ENCODE measurements at regions of chr6 and their contacts with region 1.

Region 1: GRCh38 chr6:33276864-33277662 is at the start of gene B3GALT4:
- H3K4me3 ChIP-seq: peak within 1 kb of the TSS; percentile 56
- H3K27ac ChIP-seq: peak within 1 kb of the TSS; percentile 79
- H3K4me1 ChIP-seq: peaks cover 31% of the 10 kb centered on the region
- CTCF ChIP-seq: peak; percentile 97

Region 2: DNA sequence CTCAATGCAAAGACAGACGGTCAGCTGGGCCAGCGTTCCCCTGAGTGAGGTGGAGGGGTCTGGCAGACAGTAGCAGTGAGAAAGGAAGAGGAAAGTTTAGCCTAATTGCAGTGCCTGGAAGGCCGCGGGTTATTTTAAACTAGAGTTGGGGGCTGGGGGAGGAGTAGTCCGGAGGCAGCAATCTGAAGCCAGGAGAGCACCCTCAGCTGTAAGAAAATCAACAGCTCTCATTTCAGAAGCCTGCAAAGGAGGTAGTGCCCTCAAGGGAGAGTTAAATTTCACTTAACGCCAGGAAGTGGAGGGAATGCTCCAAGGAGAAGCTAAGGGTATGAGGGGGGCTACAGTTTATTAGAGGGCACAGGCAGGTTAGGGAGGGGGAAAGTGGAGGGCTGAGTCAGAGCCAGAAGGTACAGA is 41.8 kb before region 1 on chr6:
- CTCF ChIA-PET with region 1: no interaction called
- POLR2A ChIA-PET with region 1: no interaction called
- H3K4me3 ChIP-seq: no peak overlapping the region
- H3K27ac ChIP-seq: peak overlapping the region; percentile 9; the same call in 1 of the 2 replicates
- H3K4me1 ChIP-seq: peaks cover 6% of the 10 kb centered on the region
- CTCF ChIP-seq: no peak

Region 3: GRCh38 chr6:33254591-33254990 is 22.5 kb before region 1 on chr6:
- CTCF ChIA-PET with region 1: interaction called, 8 read pairs
- POLR2A ChIA-PET with region 1: interaction called, 65 read pairs
- H3K4me3 ChIP-seq: no peak overlapping the region
- H3K27ac ChIP-seq: peak overlapping the region; percentile 50; the same call in 1 of the 2 replicates
- H3K4me1 ChIP-seq: peaks cover 5% of the 10 kb centered on the region
- CTCF ChIP-seq: no peak

Region 4: DNA sequence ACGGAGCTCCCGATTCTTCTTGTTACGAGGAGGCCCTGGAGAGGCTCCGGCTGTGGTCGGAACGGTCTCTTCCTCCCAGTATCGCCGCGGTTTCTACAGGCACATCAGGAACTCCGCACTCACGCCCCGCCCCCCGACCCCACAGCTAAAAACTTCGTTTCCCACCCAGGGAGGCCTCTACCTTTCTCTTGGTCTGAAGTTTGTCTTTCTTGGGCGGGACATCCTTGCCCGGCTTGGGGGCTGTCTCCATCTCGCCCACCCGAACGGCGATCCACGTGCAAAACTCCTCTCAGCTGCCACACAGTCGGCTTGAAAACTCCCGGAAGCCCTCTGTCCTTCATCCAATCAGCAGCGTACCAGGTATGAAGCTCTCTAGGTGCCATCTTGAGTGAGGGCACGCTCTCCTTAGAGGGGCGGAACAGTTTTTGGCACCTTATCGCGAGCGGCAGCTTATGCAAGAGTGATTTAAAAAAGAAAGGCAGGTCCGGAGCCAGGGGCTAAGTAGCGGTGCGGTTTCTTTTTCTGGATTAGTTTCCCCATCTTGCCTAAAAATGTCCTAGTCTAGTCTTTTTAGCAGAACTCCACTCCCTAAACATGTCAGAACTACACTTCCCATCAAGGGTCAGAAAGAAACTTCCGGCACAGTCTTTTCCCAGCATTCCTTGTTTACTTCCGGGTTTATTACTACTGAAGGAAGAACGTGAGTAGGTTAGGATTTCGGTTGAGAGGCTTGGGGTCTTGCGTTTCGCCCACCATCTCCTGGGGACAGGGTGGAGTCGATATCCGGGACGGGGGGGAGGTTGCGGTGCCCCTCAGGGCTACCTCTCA is 12.1 kb after region 1 on chr6 and contains the starts of genes PFDN6 and WDR46:
- CTCF ChIA-PET with region 1: interaction called, 22 read pairs
- POLR2A ChIA-PET with region 1: interaction called, 92 read pairs
- H3K4me3 ChIP-seq: peak within 1 kb of the TSS; percentile 79
- H3K27ac ChIP-seq: peak within 1 kb of the TSS; percentile 44
- H3K4me1 ChIP-seq: peaks cover 11% of the 10 kb centered on the region; the same call in 1 of the 2 replicates
- CTCF ChIP-seq: no peak

Region 5: GRCh38 chr6:33299237-33299944 is 22.3 kb after region 1 on chr6:
- CTCF ChIA-PET with region 1: interaction called, 13 read pairs
- POLR2A ChIA-PET with region 1: interaction called, 51 read pairs
- H3K4me3 ChIP-seq: peak overlapping the region; percentile 74
- H3K27ac ChIP-seq: peak overlapping the region; percentile 91
- H3K4me1 ChIP-seq: no peaks in the 10 kb centered on the region
- CTCF ChIP-seq: peak; percentile 90

Region 6: DNA sequence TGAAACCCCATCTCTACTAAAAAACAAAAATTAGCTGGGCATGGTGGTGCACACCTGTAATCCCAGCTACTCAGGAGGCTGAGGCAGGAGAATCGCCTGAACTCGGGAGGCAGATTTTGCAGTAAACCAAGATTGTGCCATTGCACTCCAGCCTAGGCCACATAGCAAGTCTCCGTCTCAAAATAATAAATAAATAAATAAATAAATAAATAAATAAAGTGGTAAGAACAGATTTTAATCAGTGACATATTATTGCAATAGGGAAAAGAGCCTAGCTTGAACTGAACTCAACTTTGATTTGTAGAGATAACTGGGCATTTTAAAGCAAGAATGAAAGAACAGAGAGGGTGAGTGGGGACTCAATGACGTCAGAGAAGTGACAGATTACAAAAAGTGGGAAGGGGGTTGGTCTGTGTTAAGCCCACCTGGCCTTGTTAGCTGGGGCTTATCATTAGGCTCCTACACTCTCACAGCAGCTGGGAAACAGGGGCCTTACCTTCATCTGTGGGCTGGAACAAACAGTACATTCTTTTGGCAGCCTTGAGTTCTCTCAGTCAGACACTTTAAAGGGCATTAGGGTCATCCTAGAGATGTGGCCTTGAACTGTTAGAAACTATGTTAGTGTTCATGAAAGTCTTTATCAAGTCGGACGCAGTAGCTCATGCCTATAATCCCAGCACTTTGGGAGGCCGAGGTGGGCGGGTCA is 90.1 kb after region 1 on chr6:
- CTCF ChIA-PET with region 1: no interaction called
- POLR2A ChIA-PET with region 1: no interaction called
- H3K4me3 ChIP-seq: no peak overlapping the region
- H3K27ac ChIP-seq: no peak overlapping the region
- H3K4me1 ChIP-seq: peaks cover 5% of the 10 kb centered on the region
- CTCF ChIP-seq: no peak

Region 7: DNA sequence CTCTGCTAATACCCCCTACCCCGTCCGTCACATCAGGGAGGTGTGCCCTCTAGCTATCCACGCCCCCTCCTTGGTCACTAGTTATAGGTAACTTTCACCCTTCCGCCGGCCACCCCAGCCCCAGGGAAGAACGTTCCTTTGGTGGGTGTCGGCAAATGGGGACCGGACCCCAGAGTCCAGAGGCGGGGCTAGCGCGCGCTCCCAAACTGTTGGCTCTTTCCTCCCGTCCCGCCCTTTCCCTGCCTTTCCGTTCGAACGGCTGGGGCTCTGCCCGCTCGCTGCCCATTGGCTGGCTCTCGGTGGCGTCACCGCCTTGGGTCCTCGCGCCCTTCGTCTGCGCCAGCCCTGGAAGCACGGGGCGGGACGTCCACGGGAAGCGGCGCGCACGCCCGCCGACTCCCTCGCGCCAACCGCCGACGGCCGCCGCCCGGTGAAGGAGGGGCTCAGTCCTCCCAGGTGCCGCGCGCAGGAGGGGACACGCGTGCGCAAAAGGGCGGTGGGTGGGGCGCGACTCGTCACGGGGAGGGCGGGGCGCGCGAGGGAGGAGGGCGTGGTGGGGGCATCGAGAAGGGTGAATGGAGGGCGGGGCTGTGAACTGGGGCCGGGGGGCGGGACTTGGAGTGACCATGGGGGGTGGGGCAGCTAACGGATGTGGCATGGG is 133.1 kb after region 1 on chr6:
- CTCF ChIA-PET with region 1: interaction called, 6 read pairs
- POLR2A ChIA-PET with region 1: interaction called, 13 read pairs
- H3K4me3 ChIP-seq: peak overlapping the region; percentile 74
- H3K27ac ChIP-seq: peak overlapping the region; percentile 50
- H3K4me1 ChIP-seq: peaks cover 4% of the 10 kb centered on the region; the same call in 1 of the 2 replicates
- CTCF ChIP-seq: no peak

Region 8: GRCh38 chr6:33425668-33426577 is 148.9 kb after region 1 on chr6:
- CTCF ChIA-PET with region 1: interaction called, 9 read pairs
- POLR2A ChIA-PET with region 1: interaction called, 18 read pairs
- H3K4me3 ChIP-seq: peak overlapping the region; percentile 69
- H3K27ac ChIP-seq: peak overlapping the region; percentile 80
- H3K4me1 ChIP-seq: peaks cover 7% of the 10 kb centered on the region
- CTCF ChIP-seq: peak; percentile 44

Region 9: GRCh38 chr6:34182751-34183531 is 905.9 kb after region 1 on chr6:
- CTCF ChIA-PET with region 1: no interaction called
- POLR2A ChIA-PET with region 1: no interaction called
- H3K4me3 ChIP-seq: no peak overlapping the region
- H3K27ac ChIP-seq: no peak overlapping the region
- H3K4me1 ChIP-seq: no peaks in the 10 kb centered on the region
- CTCF ChIP-seq: no peak